AG04449 (cell line): ENCODE measurements at regions of chr20 and their contacts with region 1.

Region 1: DNA sequence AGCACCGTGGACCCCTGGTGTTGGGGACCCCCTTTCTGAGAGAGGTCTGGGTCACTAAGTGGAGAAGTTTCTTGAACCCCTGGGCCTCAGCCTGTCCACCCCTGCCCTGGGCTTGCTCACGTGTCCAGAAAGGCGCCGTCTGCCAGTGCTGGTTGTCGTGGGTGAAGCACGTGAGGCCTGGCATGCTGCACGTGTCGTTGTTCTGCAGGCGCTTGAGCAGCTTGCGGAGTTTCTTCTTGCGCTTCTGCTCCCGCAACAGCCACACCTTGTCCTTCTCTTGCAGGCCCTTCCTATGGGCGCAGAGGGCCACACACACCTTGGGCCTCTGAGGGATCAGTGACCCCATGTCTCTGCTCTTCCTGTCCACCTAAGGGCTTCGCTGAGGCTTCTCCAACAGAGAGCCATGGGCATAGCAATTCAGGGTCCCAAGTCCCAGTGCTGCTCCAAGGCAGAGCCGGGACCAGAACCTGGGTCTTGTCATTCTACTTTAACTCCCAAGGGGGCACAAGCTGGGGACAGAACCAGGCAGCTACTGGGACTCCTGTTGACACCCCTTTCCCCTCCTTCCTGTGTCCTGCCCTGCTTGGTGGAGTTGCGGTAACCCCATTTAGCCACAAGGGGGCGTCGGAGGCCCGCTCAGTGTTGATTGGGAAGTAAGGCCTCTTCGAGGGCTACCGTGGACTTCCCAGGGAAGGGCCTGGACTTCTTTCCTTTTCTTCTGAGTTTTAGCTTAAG is 121.8 kb downstream of the SULF2 start:
- DNase-seq: no peak
- H3K4me3 ChIP-seq: no peak overlapping the region
- CTCF ChIP-seq: peak; percentile 93

Region 2: DNA sequence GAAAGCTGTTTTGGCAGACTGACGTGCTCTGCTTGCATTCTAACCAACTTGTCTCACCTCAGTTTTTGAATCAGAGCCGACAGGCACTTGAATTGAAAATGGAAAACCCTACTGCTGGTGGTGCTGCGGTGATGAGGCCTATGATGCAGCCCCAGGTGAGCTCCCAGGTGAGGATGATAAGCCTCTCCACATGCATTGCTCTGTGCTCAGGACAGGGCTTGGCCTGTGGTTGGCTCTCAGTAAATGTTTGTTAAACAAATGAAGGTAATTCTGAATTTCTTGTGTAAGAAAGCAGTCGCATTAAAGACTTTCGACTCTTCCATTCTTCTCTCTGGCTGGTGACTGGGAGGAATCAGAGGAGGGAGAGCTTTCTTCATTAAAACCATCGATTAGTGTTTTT is 14.6 kb before region 1 on chr20:
- CTCF ChIA-PET with region 1: interaction called, 24 read pairs
- POLR2A ChIA-PET with region 1: no interaction called
- DNase-seq: no peak
- H3K4me3 ChIP-seq: no peak overlapping the region
- CTCF ChIP-seq: no peak

Region 3: DNA sequence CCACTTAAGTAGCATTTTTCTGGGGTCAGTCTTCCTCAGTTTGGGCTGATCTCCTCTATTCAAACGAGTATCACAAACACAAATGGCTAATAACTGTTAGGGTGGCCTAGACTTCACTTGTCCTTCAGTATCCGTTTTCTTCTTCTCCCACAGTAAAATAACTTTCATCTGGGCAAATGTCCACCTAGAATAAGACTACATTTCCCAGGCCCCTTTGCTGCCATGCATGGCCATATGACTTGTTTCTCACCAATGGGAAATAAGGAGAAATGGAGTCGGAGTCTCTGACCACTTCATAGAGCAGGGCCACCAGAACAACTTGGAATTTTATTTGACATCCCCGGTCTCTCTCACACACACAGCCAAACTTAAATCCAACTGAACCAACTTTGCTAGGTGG is 70.4 kb after region 1 on chr20:
- CTCF ChIA-PET with region 1: no interaction called
- POLR2A ChIA-PET with region 1: no interaction called
- DNase-seq: no peak
- H3K4me3 ChIP-seq: no peak overlapping the region
- CTCF ChIP-seq: no peak

Region 4: DNA sequence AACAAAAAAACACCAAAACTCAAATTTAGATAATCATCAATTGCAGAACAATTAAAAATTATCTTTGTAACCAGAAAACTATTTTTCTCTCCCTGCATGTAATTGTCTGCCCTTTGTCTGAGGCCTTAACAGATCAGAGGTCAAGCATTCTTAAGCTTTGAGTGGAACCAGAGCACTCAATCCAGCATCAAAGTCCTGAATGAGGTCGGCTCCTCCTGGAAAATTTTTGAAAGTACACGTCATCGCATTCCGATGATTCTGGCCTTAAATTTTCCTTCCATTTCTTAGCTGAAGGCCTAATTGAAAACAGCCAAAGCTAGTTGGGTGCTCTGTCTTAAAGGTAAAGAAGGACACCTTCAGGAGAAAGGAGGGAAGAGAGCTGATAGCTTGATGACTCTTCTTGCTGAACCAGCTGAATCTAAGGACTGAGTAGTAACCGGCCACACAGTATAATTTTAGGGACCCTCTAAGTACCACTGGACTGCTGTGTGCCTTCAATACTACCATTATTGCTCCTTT is 632.0 kb after region 1 on chr20:
- CTCF ChIA-PET with region 1: interaction called, 31 read pairs
- POLR2A ChIA-PET with region 1: no interaction called
- DNase-seq: peak; percentile 81
- H3K4me3 ChIP-seq: no peak overlapping the region
- CTCF ChIP-seq: peak; percentile 45

Region 5: DNA sequence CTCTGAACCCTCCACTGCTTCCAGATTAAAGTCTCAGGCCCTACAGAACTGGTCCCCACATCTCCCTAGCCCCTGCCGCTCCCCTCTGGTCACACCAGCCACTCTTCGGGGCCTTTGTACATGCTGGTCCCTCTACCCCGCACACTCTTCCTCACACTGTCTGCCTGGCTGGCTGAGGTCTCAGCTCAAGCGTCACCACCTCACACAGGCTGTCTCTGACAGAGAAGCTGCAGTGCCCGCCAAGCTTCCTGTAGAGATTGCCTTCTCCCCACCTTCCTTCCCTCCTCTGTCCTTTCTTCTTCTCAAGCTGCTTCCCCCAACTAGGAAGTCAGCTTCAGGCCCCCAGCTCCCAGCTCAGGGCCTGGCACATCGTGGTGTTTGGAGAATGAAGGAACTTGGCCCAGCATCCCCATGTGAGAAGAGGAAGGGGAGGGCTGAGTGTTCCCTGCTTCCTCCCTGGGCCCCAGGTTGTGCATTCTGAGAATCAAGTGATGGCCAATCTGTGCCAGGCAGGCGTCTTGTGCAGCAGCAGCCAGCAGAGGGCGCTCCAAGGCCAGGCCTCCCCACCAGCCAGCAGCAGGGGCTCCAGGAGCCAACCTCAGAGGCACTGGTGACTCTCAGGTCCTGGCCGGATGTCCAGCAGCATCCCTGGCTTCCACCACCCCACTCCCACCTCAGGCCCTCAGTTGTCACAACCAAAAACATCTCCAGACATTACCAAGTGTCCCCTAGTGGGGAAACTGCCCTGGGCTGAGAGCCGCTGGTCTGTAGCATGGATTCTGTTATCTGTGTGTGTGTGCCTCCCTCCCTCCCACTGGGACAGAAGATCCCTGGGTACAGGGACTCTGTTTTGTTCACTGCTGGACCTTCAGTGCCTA is 972.2 kb after region 1 on chr20:
- CTCF ChIA-PET with region 1: interaction called, 422 read pairs
- POLR2A ChIA-PET with region 1: no interaction called
- DNase-seq: no peak
- H3K4me3 ChIP-seq: no peak overlapping the region
- CTCF ChIP-seq: peak; percentile 96